ENCODE measurements at regions of chr16 and their contacts with region 1.

Region 1: GRCh38 chr16:89343501-89344457 is 126.3 kb downstream of the ZNF778 start:
- DNase-seq: peak in 1 of 2 donors; percentile 37
- H3K4me3 ChIP-seq: no peak overlapping the region
- H3K27ac ChIP-seq: peak overlapping the region in 4 of 5 donors; percentile 60 to 80 (median 74)
- H3K4me1 ChIP-seq: peaks cover 31 to 71% (median 50%) of the 10 kb centered on the region in 4 donors
- H3K27me3 ChIP-seq: no peaks in the 10 kb centered on the region
- CTCF ChIP-seq: no peak
- EP300 ChIP-seq: no peak
- POLR2A ChIP-seq: no peak

Region 2: DNA sequence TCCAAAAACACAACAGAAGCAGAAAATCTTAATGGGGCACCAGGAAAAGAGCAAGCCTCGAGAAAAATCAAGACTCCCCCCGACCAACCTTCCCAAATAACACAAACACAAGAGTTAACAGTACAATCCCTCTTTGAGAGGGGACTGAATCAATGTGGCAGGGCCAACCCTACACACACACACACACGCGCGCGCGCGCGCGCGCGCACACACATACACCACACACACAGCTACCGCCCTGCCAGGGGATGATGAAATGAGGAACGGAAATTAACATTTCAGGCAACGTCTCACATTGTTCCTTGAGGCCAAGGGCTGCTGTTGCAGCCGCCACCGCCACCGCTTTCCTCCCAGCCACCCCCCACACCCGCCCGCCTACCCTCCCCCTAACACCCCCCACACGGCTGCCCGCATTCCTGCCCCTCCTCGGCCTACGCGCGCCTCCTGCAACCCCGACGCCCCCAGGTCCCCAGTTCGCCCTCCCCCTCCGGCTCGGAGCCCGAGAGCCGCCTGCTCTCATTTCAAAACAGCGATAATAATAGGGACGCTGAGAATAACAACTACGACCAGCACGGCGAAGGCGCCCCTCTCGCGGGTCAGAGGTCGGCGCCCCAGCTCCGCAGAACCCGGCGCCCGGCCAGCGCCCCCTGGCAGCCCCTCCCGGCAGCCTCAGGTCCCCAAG is 145.4 kb after region 1 on chr16:
- intact Hi-C with region 1: loop called (anchors 10 kb)
- DNase-seq: peak; percentile 86 to 96
- H3K4me3 ChIP-seq: peak overlapping the region; percentile 88 to 99 (median 96)
- H3K27ac ChIP-seq: peak overlapping the region; percentile 96 to 100 (median 98)
- H3K4me1 ChIP-seq: peaks cover 42 to 76% (median 65%) of the 10 kb centered on the region in 4 donors
- H3K27me3 ChIP-seq: no peaks in the 10 kb centered on the region
- CTCF ChIP-seq: peak in 5 of 7 experiments; percentile 19 to 44 (median 28)
- EP300 ChIP-seq: no peak
- POLR2A ChIP-seq: no peak

Measured in stomach (tissue), 19 donors.